Panc1 (cell line): ENCODE measurements at regions of chrX and their contacts with region 1.

Region 1: GRCh38 chrX:106170318-106170717 is 2.2 kb downstream of the PWWP3B start:
- DNase-seq: no peak
- ATAC-seq: no peak
- H3K4me3 ChIP-seq: no peak overlapping the region
- H3K27ac ChIP-seq: no peak overlapping the region
- H3K4me1 ChIP-seq: no peaks in the 10 kb centered on the region
- H3K27me3 ChIP-seq: peaks cover 9% of the 10 kb centered on the region
- CTCF ChIP-seq: peak; percentile 53; the same call in 1 of the 2 replicates

Region 2: GRCh38 chrX:106397801-106398538 is 227.7 kb after region 1 on chrX:
- CTCF ChIA-PET with region 1: no interaction called
- POLR2A ChIA-PET with region 1: no interaction called
- in situ Hi-C with region 1: no loop called
- intact Hi-C with region 1: loop called (anchors 10 kb)
- DNase-seq: no peak
- ATAC-seq: peak; percentile 77
- H3K4me3 ChIP-seq: no peak overlapping the region
- H3K27ac ChIP-seq: no peak overlapping the region
- H3K4me1 ChIP-seq: no peaks in the 10 kb centered on the region
- H3K27me3 ChIP-seq: no peaks in the 10 kb centered on the region
- CTCF ChIP-seq: peak; percentile 48